Activated CD4-positive, alpha-beta T cell treated with anti-CD3 and anti-CD28 coated beads, Interleukin-2, amount 10 ng/mL, durations not matched to agents 24 days and 14 days (primary cell): ENCODE measurements at regions of chr3 and their contacts with region 1.

Region 1: GRCh38 chr3:184135149-184135910 is at the start of gene EIF2B5:
- DNase-seq: peak; percentile 96
- H3K4me3 Mint-ChIP-seq: peak within 1 kb of the TSS; percentile 97
- H3K27ac Mint-ChIP-seq: peak within 1 kb of the TSS; percentile 93
- H3K4me1 Mint-ChIP-seq: peaks cover 32% of the 10 kb centered on the region
- H3K27me3 Mint-ChIP-seq: peaks cover 5% of the 10 kb centered on the region
- total RNA-seq, gene EIF2B5: 72.2 and 74.7 TPM in 2 replicates

Region 2: DNA sequence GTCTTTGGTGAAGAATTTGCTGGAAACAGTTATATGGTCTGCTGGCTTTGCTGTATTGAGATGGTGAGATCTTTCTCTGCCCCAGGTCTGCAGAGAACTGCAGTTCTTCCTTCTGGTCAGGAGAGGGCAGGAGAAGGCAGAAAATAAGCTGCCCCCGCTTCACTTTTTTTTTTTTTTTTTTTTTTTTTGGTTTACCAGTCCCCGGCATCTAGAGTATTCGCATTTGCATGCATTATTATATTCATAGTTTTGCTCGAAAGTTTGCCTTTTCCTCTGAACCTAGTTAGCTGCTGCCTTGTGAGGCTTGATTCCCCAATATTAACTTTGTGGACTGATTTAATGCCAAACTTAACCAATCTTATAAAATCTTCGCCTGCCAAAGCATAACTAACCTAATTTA is 240.0 kb before region 1 on chr3:
- intact Hi-C with region 1: loop called (anchors 10 kb)
- DNase-seq: peak; percentile 83
- H3K4me3 Mint-ChIP-seq: no peak overlapping the region
- H3K27ac Mint-ChIP-seq: no peak overlapping the region
- H3K4me1 Mint-ChIP-seq: no peaks in the 10 kb centered on the region
- H3K27me3 Mint-ChIP-seq: peaks cover 17% of the 10 kb centered on the region

Region 3: GRCh38 chr3:184154885-184155643 is 19.7 kb after region 1 on chr3 and contains the start of gene DVL3:
- intact Hi-C with region 1: loop called (anchors 1 kb)
- DNase-seq: peak; percentile 88
- H3K4me3 Mint-ChIP-seq: peak within 1 kb of the TSS; percentile 95
- H3K27ac Mint-ChIP-seq: peak within 1 kb of the TSS; percentile 78
- H3K4me1 Mint-ChIP-seq: peaks cover 14% of the 10 kb centered on the region
- H3K27me3 Mint-ChIP-seq: no peaks in the 10 kb centered on the region
- total RNA-seq, gene DVL3: 49.0 and 54.5 TPM in 2 replicates

Region 4: GRCh38 chr3:184168363-184169120 is 33.2 kb after region 1 on chr3:
- intact Hi-C with region 1: no loop called
- DNase-seq: no peak
- H3K4me3 Mint-ChIP-seq: no peak overlapping the region
- H3K27ac Mint-ChIP-seq: no peak overlapping the region
- H3K4me1 Mint-ChIP-seq: peaks cover 6% of the 10 kb centered on the region
- H3K27me3 Mint-ChIP-seq: no peaks in the 10 kb centered on the region

Region 5: DNA sequence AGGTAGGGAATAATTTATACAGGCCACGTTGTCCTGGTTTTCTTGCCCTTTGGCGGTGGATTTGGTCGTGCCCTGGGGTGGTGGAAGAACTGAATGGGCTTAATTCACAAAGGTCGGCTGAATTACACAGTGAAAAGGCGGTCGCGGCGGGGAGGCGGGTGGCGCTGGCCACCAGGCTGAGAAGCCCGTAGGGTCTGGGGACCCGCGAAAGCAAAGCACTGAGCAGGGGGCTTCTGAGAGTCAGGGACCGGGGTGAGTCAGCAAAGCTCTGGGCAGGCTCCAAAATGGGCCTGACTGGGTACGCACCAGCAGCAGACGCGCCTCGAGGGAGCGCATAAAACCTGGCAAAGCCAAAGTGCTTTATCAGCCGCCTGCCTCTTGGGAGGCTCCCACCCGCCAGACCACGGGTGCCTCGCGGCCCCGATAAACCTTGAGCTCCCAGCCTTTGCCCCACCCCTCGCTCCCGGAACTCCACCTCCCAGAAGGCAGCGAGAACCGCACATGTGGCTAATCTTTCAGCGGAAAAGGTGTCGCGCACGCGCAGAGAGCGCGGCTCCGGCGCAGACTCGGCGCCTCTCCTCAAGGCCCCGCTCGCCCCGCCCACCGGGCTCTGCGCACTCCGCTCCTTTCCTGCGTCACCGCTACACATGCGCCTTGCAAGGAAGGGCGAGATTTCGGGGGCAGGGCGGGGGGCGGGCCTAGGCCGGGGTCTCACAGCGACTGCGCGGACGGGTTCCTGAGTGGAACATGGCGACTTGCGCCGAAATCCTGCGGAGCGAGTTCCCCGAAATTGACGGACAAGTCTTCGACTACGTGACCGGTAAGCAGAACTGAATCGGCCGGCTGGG is 50.4 kb after region 1 on chr3 and contains the start of gene ABCF3:
- intact Hi-C with region 1: loop called (anchors 1 kb)
- DNase-seq: peak; percentile 100
- H3K4me3 Mint-ChIP-seq: peak within 1 kb of the TSS; percentile 92
- H3K27ac Mint-ChIP-seq: peak within 1 kb of the TSS; percentile 92
- H3K4me1 Mint-ChIP-seq: peaks cover 28% of the 10 kb centered on the region
- H3K27me3 Mint-ChIP-seq: no peaks in the 10 kb centered on the region
- total RNA-seq, gene ABCF3: 66.9 and 67.6 TPM in 2 replicates